Activated CD8-positive, alpha-beta T cell treated with anti-CD3 and anti-CD28 coated beads, Interleukin-2, amount 10 ng/mL, durations not matched to agents 7 days and 5 days (primary cell): ENCODE measurements at regions of chr7 and their contacts with region 1.

Region 1: GRCh38 chr7:50317221-50317678 is 12.7 kb downstream of the IKZF1 start:
- DNase-seq: peak; percentile 71
- ATAC-seq: peak; percentile 71
- H3K4me3 Mint-ChIP-seq: peak overlapping the region; percentile 76
- H3K27ac Mint-ChIP-seq: peak overlapping the region; percentile 93
- H3K4me1 Mint-ChIP-seq: peaks cover 94% of the 10 kb centered on the region
- H3K27me3 Mint-ChIP-seq: no peaks in the 10 kb centered on the region

Region 2: DNA sequence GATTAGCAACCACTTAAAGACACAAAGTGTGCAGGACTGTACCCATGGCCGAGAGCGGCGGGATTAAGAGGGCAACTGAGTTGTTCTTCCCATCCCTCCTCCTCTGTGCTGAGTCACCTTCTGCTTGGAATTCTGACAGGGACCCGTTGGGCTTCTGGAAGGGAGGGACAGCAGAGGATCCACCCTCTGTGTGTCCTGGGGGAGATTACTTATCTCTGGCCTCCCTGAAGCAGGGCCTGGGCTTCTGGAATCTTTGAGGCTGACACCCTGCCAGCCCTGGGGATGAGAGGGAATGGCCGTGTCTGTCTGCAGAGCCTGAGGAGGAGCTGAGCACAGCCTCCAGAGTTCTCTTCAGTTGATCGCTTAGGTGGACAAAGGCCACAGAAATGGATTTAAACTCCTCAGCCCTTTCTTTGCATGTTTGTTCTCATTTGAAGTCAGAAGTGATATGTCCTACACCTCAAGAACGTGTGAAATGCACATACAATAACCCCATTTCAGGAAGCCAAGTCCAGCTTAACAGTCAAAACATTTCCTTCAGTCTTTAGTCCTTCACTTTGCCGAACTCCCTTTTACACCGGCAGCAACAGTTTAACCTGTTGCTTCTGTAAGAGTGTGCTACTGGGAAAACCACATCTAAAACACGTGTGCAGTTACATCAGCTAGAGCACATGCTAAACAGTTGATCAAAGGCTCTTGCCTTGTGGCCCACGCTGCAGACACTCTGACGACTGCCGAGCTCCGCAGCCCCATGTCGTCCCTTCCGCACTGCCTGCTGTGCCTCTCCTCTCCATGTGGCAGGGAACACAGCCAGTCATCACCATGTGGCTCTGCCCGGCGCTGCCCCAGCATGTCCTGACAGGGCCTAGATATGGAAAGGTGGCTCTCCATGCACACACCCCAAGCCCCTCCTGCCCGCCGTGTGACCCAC is 43.0 kb after region 1 on chr7:
- CTCF ChIA-PET with region 1: interaction called, 31 read pairs
- POLR2A ChIA-PET with region 1: interaction called, 9 read pairs
- DNase-seq: peak; percentile 89
- ATAC-seq: peak; percentile 87
- H3K4me3 Mint-ChIP-seq: peak overlapping the region; percentile 68
- H3K27ac Mint-ChIP-seq: peak overlapping the region; percentile 96
- H3K4me1 Mint-ChIP-seq: peaks cover 96% of the 10 kb centered on the region
- H3K27me3 Mint-ChIP-seq: no peaks in the 10 kb centered on the region

Region 3: GRCh38 chr7:50446542-50446960 is 129.3 kb after region 1 on chr7:
- CTCF ChIA-PET with region 1: no interaction called
- POLR2A ChIA-PET with region 1: no interaction called
- DNase-seq: no peak
- ATAC-seq: no peak
- H3K4me3 Mint-ChIP-seq: no peak overlapping the region
- H3K27ac Mint-ChIP-seq: no peak overlapping the region
- H3K4me1 Mint-ChIP-seq: peaks cover 63% of the 10 kb centered on the region
- H3K27me3 Mint-ChIP-seq: no peaks in the 10 kb centered on the region

Region 4: GRCh38 chr7:50534690-50535290 is 217.5 kb after region 1 on chr7:
- CTCF ChIA-PET with region 1: no interaction called
- POLR2A ChIA-PET with region 1: no interaction called
- DNase-seq: no peak
- ATAC-seq: no peak
- H3K4me3 Mint-ChIP-seq: no peak overlapping the region
- H3K27ac Mint-ChIP-seq: no peak overlapping the region
- H3K4me1 Mint-ChIP-seq: no peaks in the 10 kb centered on the region
- H3K27me3 Mint-ChIP-seq: no peaks in the 10 kb centered on the region